ENCODE measurements at regions of chr1 and their contacts with region 1.

Region 1: GRCh38 chr1:111507411-111508201 is 4.2 kb upstream of the ADORA3 start:
- DNase-seq: peak; percentile 58
- H3K4me3 Mint-ChIP-seq: peak overlapping the region; percentile 68
- H3K27ac Mint-ChIP-seq: peak overlapping the region; percentile 92
- H3K4me1 Mint-ChIP-seq: peaks cover 58% of the 10 kb centered on the region
- H3K27me3 Mint-ChIP-seq: no peaks in the 10 kb centered on the region

Region 2: DNA sequence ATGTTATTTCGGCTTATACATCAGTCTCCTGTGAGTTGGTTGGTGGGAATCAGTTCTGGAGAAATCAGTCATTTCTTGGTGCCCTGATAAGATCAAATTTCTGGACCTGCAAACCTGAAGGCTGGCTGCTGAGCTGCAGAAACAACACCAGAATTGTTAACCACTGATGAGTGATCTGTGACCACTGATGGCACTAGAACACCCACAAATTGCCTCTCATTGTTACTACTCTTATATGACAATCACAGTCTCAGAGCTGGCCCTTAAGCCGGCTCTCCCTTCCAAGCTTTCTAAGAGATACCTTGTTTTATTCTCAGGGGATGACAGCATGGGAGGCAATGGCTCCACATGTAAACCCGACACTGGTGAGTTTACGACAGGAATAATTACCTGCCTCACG is 31.9 kb before region 1 on chr1:
- intact Hi-C with region 1: loop called (anchors 1 kb)
- DNase-seq: peak; percentile 30
- H3K4me3 Mint-ChIP-seq: peak overlapping the region; percentile 44
- H3K27ac Mint-ChIP-seq: peak overlapping the region; percentile 70
- H3K4me1 Mint-ChIP-seq: peaks cover 49% of the 10 kb centered on the region
- H3K27me3 Mint-ChIP-seq: peaks cover 7% of the 10 kb centered on the region

Region 3: DNA sequence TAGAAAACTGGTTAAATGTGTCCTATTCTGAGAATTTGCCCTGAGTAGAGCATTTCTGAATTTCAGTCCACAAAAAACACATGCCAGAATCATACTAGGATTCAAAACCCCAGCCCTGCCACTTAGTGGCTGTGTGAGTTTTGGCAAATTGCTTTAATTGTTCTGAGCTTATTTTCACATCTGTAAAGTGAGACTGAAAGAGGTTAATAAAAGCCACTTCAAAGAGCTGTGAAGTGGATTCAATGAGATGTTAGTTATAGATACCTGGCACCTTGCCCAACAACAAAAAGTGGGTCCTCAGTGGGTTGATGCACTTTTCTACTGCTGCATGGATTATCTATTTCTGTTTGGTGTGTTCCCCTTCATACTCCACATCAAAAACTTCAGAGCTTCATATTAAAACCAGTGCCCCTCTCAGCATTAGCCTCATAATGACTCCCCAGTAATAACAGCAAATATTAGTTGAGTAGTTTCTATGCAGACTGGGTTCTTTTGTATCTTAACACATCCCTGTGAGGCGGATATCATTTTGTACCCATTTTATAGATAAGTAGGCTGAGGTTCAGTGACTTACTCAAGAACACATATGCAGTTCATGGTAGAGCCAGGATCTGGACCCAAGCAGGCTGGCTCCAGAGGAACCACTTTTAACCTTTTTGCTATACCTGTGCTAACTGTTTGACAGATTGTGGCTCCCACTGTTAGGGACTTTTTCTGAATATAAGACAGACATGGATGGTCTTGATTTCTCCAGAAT is 10.0 kb after region 1 on chr1:
- intact Hi-C with region 1: no loop called
- DNase-seq: no peak
- H3K4me3 Mint-ChIP-seq: peak overlapping the region; percentile 49
- H3K27ac Mint-ChIP-seq: peak overlapping the region; percentile 70
- H3K4me1 Mint-ChIP-seq: peaks cover 44% of the 10 kb centered on the region
- H3K27me3 Mint-ChIP-seq: no peaks in the 10 kb centered on the region

Region 4: GRCh38 chr1:111603979-111604378 is 96.4 kb after region 1 on chr1:
- intact Hi-C with region 1: loop called (anchors 2 kb)
- DNase-seq: peak; percentile 82
- H3K4me3 Mint-ChIP-seq: peak overlapping the region; percentile 66
- H3K27ac Mint-ChIP-seq: peak overlapping the region; percentile 97
- H3K4me1 Mint-ChIP-seq: peaks cover 70% of the 10 kb centered on the region
- H3K27me3 Mint-ChIP-seq: no peaks in the 10 kb centered on the region

Region 5: DNA sequence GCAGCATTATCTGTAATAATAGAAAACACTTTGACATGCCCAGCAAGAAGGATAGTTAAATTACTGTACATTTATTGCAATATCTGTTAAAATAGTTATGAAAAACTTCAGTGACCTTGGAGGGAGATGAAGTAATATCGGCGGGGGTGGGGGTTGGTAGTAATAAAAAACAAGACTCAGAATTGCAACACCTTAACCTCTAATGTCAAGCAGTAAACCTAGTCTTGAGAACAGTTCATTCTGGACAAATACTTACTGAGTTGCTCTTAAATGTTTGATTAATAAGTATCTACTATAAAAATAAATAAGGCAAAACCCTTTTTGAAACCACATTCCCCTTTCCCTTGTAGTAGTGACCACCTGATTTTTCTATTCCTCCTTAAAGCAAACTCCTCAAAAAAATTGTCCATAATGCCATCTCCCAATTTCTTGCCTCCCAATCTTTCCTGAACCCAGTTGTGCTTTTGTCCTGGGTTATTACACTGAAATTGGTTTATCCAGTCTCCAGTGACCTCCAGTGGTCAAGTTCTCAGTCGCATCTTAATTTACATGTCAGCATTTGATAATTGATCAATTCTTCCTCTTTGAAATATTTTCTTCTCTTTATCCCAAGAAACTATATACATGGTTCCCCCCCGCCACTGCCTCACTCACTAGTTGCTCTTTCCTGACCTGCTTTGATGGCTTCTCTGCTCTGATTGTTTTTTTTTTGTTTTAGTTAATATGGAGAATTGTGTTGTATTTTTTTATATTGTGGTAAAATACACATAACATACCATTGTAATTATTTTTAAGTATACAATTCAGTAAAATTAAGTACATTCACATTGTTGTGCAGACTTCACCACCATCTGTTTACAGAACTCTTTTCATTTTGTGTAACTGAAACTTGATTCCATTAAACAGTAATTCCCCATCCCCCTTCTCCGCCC is 148.7 kb after region 1 on chr1:
- intact Hi-C with region 1: loop called (anchors 2 kb)
- DNase-seq: no peak
- H3K4me3 Mint-ChIP-seq: no peak overlapping the region
- H3K27ac Mint-ChIP-seq: peak overlapping the region; percentile 44
- H3K4me1 Mint-ChIP-seq: peaks cover 35% of the 10 kb centered on the region
- H3K27me3 Mint-ChIP-seq: no peaks in the 10 kb centered on the region

Region 6: GRCh38 chr1:111739194-111739924 is 231.8 kb after region 1 on chr1 and contains the start of gene INKA2:
- intact Hi-C with region 1: loop called (anchors 2 kb)
- DNase-seq: peak; percentile 80
- H3K4me3 Mint-ChIP-seq: peak within 1 kb of the TSS; percentile 93
- H3K27ac Mint-ChIP-seq: peak within 1 kb of the TSS; percentile 88
- H3K4me1 Mint-ChIP-seq: peaks cover 16% of the 10 kb centered on the region
- H3K27me3 Mint-ChIP-seq: peaks cover 38% of the 10 kb centered on the region
- total RNA-seq, gene INKA2: 0.43 and 2.2 TPM in 2 replicates

Measured in activated T-helper 2 cell treated with anti-CD3 and anti-CD28 coated beads, Interferon-gamma antibody, Interleukin-2, Interleukin-4, amounts not matched to agents 10 μg/mL and 5 μg/mL and 100 μg/mL, durations not matched to agents 14 hours and 24 hours and 36 hours (primary cell).